ENCODE measurements at regions of chr1 and their contacts with region 1.

Region 1: DNA sequence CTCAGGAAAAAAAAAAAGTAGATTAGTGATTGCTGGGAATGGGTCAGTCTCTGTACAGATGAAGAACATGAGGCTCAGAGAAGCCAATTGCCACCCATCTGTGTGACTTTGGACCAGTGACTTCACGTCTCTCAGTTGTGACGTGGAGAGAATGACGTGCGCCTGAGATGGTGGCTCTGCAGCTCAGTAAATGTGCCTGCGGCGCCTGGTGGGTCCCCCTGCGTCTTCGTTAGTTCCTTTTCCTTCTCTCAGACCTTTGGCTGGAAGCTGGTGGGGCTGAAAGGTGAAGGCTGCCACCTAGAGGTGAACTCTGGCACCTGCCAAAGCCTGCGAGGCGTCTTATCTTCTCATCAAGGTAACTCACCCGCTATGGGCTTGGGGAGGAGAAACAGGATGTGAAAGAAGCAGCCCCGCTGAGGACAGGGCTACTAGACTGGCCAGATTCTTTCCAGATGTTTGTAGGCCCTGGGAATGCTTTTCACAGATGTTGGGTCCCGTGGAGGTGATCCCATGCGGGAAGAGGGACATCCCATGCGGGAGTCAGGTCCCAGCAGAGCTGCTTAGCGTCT is 8.7 kb upstream of the E2F2 start:
- DNase-seq: peak; percentile 97
- ATAC-seq: peak; percentile 97
- H3K4me3 Mint-ChIP-seq: peak overlapping the region; percentile 5
- H3K27ac Mint-ChIP-seq: peak overlapping the region; percentile 64
- H3K4me1 Mint-ChIP-seq: peaks cover 21% of the 10 kb centered on the region
- H3K27me3 Mint-ChIP-seq: no peaks in the 10 kb centered on the region

Region 2: DNA sequence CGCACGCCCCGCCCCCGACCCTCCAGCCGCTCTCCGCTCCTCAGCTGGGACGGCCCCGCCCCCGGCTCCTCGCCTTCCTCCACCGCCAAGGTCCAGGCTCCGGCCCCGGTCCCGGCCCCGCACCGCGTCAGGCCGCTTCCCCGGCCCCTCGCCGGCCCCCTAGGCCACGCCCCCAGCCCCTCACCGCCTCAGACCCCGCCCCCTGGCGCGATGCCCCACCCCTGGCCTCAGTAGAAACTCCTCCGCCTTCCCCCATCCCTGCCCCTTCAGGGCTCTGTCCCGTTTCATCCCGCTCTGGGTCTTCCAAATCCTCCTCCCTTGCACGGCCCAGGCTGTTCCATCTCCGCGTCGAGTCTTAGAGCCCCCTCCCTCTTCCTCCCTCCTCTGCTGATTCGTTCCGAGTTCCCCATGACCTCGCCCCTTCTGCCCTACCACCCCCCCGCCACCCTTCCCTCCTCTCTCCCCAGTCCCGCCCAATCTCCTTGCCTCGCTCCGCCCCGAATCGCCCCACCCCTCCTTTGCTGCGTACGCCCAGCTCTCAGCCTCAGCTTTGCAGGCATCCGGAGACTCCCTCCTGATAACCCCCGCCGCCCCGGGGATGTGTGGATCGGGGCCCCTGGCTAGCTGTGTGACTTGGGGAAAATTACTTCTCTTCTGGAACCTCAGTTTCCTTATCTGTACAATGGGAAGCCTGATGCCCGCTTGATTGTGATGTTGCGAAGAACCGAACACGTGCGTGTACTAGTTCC is 55.4 kb before region 1 on chr1:
- CTCF ChIA-PET with region 1: interaction called, 10 read pairs
- POLR2A ChIA-PET with region 1: no interaction called
- DNase-seq: peak; percentile 95
- ATAC-seq: peak; percentile 91
- H3K4me3 Mint-ChIP-seq: peak overlapping the region; percentile 79
- H3K27ac Mint-ChIP-seq: peak overlapping the region; percentile 79
- H3K4me1 Mint-ChIP-seq: peaks cover 17% of the 10 kb centered on the region
- H3K27me3 Mint-ChIP-seq: peaks cover 58% of the 10 kb centered on the region

Region 3: GRCh38 chr1:23577056-23578004 is 37.5 kb after region 1 on chr1:
- CTCF ChIA-PET with region 1: interaction called, 13 read pairs
- POLR2A ChIA-PET with region 1: no interaction called
- DNase-seq: peak; percentile 70
- ATAC-seq: peak; percentile 89
- H3K4me3 Mint-ChIP-seq: peak overlapping the region; percentile 48
- H3K27ac Mint-ChIP-seq: peak overlapping the region; percentile 90
- H3K4me1 Mint-ChIP-seq: peaks cover 65% of the 10 kb centered on the region
- H3K27me3 Mint-ChIP-seq: no peaks in the 10 kb centered on the region

Region 4: GRCh38 chr1:23619299-23620188 is 79.8 kb after region 1 on chr1:
- CTCF ChIA-PET with region 1: interaction called, 1,062 read pairs
- POLR2A ChIA-PET with region 1: interaction called, 3 read pairs
- DNase-seq: peak; percentile 80
- ATAC-seq: peak; percentile 77
- H3K4me3 Mint-ChIP-seq: peak overlapping the region; percentile 75
- H3K27ac Mint-ChIP-seq: peak overlapping the region; percentile 81
- H3K4me1 Mint-ChIP-seq: peaks cover 72% of the 10 kb centered on the region
- H3K27me3 Mint-ChIP-seq: no peaks in the 10 kb centered on the region

Region 5: DNA sequence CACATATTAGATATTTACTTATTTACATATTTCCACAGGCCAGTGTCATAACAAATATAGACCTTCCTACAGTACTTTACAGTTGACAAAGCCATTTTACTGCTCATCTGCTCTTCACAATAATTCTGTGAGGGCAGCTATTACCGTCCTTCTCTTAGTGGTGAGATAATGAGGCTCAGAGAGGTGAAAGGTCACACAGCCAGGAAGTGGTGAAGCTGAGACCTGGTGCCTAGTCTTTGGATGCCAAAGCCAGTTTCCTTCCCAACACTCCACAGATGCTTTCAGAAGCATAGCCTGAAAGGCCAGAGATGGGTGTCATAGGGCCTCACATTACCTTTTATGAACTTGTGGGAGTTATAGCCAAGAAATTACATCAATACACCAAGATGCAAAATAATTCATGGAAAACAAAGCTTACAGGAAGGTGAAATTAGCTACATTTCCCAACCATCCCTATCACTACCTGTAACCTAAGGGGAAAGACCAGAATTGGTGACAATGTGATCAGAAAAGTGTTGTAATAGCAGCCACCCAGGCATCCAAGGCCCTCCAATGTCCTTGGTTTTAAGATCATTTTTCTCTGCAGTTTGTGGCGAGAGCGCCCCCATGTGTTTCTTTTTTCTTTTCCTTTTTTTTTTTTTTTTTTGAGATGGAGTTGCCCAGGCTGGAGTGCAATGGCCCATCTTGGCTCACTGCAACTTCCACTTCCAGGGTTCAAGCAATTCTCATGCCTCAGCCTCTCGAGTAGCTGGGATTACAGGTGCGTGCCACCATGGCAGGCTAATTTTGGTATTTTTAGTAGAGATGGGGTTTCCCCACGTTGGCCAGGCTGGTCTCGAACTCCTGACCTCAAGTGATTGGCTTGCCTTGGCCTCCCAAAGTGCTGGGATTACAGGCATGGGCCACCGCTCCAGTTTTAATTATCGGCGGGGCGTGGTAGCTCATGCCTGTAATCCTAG is 125.3 kb after region 1 on chr1:
- CTCF ChIA-PET with region 1: interaction called, 25 read pairs
- POLR2A ChIA-PET with region 1: no interaction called
- DNase-seq: peak; percentile 39
- ATAC-seq: peak; percentile 36
- H3K4me3 Mint-ChIP-seq: no peak overlapping the region
- H3K27ac Mint-ChIP-seq: peak overlapping the region; percentile 53
- H3K4me1 Mint-ChIP-seq: peaks cover 12% of the 10 kb centered on the region
- H3K27me3 Mint-ChIP-seq: no peaks in the 10 kb centered on the region